Prostate gland (tissue), 2 donors: ENCODE measurements at regions of chr3 and their contacts with region 1.

Region 1: GRCh38 chr3:15557511-15557946 is 36.0 kb upstream of the COLQ start:
- DNase-seq: peak; percentile 24
- H3K4me3 ChIP-seq: no peak overlapping the region
- H3K27ac ChIP-seq: no peak overlapping the region
- H3K4me1 ChIP-seq: no peaks in the 10 kb centered on the region
- H3K27me3 ChIP-seq: no peaks in the 10 kb centered on the region
- CTCF ChIP-seq: peak in 3 of 4 experiments; percentile 39 to 62 (median 55)
- POLR2A ChIP-seq: no peak

Region 2: GRCh38 chr3:15427182-15427880 is 130.2 kb before region 1 on chr3 and contains the starts of genes EAF1 and METTL6:
- intact Hi-C with region 1: loop called (anchors 5 kb)
- DNase-seq: peak; percentile 68
- H3K4me3 ChIP-seq: peak within 1 kb of the TSS; percentile 57 to 63
- H3K27ac ChIP-seq: peak within 1 kb of the TSS; percentile 45 to 58
- H3K4me1 ChIP-seq: peaks cover 17% of the 10 kb centered on the region
- H3K27me3 ChIP-seq: no peaks in the 10 kb centered on the region
- CTCF ChIP-seq: peak in 1 of 4 experiments; percentile 25
- POLR2A ChIP-seq: peak; percentile 21
- total RNA-seq, gene EAF1: 25.5 to 30.9 TPM
- total RNA-seq, gene METTL6: 12.5 to 14.8 TPM

Region 3: DNA sequence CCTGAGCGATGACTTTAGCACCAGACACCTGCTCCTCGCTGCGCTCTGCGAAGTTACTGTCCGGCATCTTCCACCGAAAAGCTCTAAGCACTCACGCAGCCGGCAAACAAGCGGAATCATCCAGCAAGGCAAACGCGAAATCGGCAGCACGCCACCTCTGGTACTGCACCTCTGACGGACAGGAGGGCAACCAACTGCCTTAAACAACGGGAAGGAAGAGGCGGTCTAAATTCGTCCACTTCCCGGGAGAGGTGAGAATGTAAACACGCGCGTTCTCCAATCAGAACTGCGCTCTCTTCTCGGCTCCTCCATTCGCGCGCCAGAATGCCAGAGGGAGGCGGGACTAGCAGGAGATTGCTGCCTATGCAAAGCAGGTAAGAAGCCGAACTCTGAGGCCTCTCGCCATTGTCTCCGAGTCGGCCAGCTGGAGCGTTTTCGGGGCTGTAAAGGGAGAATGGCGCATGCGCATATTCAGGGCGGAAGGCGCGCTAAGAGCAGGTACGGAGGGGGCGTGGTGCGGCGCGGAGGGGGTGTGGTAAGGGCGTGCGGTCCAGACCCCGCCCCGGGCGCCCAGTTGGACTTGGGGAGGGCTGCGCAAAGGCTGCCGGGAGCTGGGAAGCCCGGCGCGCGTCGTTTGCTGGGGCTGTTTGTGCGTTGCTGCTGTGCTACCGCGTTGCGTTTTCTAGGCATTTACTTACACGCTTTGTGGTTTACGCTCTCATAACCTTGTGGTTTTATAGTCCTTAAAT is 44.0 kb after region 1 on chr3 and contains the starts of genes BTD and HACL1:
- intact Hi-C with region 1: no loop called
- DNase-seq: peak; percentile 98
- H3K4me3 ChIP-seq: peak within 1 kb of the TSS; percentile 71 to 83
- H3K27ac ChIP-seq: peak within 1 kb of the TSS; percentile 84 to 87
- H3K4me1 ChIP-seq: no peaks in the 10 kb centered on the region
- H3K27me3 ChIP-seq: no peaks in the 10 kb centered on the region
- CTCF ChIP-seq: peak in 3 of 4 experiments; percentile 23 to 58 (median 46)
- POLR2A ChIP-seq: peak; percentile 65
- total RNA-seq, gene BTD: 34.4 to 42.7 TPM
- total RNA-seq, gene HACL1: 27.9 to 30.6 TPM